ENCODE measurements at regions of chr16 and their contacts with region 1.

Region 1: GRCh38 chr16:30112197-30113030 is 923 bp downstream of the GDPD3 start:
- DNase-seq: peak; percentile 75
- ATAC-seq: peak; percentile 79
- H3K4me3 Mint-ChIP-seq: no peak overlapping the region
- H3K27ac Mint-ChIP-seq: no peak overlapping the region
- H3K4me1 Mint-ChIP-seq: peaks cover 6% of the 10 kb centered on the region
- H3K27me3 Mint-ChIP-seq: no peaks in the 10 kb centered on the region
- CTCF ChIP-seq: peak; percentile 92

Region 2: DNA sequence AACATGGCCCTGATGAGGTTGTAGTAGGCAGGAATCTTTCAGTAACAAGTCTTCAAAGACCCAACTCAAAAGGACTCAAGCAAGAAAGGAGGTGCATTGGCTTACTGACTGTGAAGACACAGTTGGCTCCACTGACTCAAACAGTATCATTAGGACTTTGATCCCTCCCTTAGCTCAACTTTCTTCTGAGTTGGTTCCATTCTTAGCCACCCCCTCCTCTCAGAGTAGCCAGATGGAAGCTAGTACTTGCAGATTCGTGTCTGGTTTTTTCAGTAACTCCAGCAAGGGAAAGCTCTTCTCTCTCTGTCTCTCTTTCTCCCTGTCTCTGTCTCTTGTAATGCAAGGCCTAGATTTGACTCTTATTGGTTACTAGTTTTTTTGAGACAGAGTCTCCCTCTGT is 15.6 kb after region 1 on chr16:
- CTCF ChIA-PET with region 1: interaction called, 15 read pairs
- POLR2A ChIA-PET with region 1: interaction called, 3 read pairs
- intact Hi-C with region 1: no loop called
- DNase-seq: no peak
- ATAC-seq: no peak
- H3K4me3 Mint-ChIP-seq: no peak overlapping the region
- H3K27ac Mint-ChIP-seq: no peak overlapping the region
- H3K4me1 Mint-ChIP-seq: peaks cover 8% of the 10 kb centered on the region
- H3K27me3 Mint-ChIP-seq: no peaks in the 10 kb centered on the region
- CTCF ChIP-seq: no peak

Region 3: DNA sequence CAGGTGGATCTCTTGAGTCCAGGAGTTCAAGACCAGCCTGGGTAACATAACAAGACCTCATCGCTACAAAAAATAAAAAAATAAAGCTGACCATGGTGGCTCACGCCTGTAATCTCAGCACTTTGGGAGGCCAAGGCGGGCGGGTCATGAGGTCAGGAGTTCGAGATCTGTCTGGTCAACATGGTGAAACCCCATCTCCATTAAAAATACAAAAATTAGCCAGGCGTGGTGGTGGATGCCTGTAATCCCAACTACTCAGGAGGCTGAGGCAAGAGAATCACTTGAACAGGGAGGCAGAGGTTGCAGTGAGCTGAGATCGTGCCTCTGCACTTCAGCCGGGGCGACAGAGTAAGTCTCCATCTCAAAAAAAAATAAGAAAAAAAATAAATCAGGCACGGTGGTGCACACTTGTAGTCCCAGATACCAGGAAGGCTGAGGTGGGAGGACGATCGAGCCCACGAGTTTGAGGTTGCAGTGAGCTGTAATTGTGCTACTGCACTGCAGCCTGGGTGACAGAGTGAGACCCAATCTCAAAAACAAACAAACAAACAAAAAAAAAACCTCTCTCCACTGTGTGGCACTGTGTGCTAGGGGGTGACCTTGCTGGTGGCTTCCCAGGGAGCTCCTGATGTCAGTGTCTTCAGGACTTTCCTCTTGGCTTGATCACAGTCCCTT is 30.4 kb after region 1 on chr16:
- CTCF ChIA-PET with region 1: interaction called, 16 read pairs
- POLR2A ChIA-PET with region 1: no interaction called
- intact Hi-C with region 1: no loop called
- DNase-seq: peak; percentile 43
- ATAC-seq: peak; percentile 80
- H3K4me3 Mint-ChIP-seq: no peak overlapping the region
- H3K27ac Mint-ChIP-seq: peak overlapping the region; percentile 50
- H3K4me1 Mint-ChIP-seq: peaks cover 26% of the 10 kb centered on the region
- H3K27me3 Mint-ChIP-seq: no peaks in the 10 kb centered on the region
- CTCF ChIP-seq: no peak

Region 4: GRCh38 chr16:30186782-30187555 is 74.6 kb after region 1 on chr16:
- CTCF ChIA-PET with region 1: interaction called, 8 read pairs
- POLR2A ChIA-PET with region 1: interaction called, 10 read pairs
- intact Hi-C with region 1: no loop called
- DNase-seq: peak; percentile 95
- ATAC-seq: peak; percentile 10
- H3K4me3 Mint-ChIP-seq: peak overlapping the region; percentile 100
- H3K27ac Mint-ChIP-seq: peak overlapping the region; percentile 100
- H3K4me1 Mint-ChIP-seq: peaks cover 20% of the 10 kb centered on the region
- H3K27me3 Mint-ChIP-seq: no peaks in the 10 kb centered on the region
- CTCF ChIP-seq: peak; percentile 97